RWPE1 (cell line): ENCODE measurements at regions of chr5 and their contacts with region 1.

Region 1: DNA sequence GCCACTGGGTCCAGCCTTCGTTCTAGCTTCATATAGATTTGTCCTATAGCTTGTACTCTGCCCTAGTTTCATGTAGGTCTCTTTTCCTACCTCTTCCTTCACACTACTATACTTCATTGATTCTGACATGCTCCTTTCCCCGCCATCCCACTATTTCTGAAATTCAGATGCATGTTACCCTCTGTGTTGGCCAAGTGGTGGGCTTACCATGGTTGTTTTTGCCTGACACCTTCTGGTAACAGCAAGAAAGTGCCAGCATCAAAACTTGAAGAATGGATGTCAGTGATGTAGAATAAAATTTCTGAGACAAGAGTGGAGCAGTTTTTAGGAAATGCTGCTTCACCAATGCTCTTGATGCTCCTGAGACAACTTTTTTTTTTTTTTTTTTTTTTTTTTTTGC is 19.5 kb upstream of the SERINC5 start:
- DNase-seq: no peak
- H3K27ac ChIP-seq: no peak overlapping the region
- CTCF ChIP-seq: peak; percentile 33

Region 2: DNA sequence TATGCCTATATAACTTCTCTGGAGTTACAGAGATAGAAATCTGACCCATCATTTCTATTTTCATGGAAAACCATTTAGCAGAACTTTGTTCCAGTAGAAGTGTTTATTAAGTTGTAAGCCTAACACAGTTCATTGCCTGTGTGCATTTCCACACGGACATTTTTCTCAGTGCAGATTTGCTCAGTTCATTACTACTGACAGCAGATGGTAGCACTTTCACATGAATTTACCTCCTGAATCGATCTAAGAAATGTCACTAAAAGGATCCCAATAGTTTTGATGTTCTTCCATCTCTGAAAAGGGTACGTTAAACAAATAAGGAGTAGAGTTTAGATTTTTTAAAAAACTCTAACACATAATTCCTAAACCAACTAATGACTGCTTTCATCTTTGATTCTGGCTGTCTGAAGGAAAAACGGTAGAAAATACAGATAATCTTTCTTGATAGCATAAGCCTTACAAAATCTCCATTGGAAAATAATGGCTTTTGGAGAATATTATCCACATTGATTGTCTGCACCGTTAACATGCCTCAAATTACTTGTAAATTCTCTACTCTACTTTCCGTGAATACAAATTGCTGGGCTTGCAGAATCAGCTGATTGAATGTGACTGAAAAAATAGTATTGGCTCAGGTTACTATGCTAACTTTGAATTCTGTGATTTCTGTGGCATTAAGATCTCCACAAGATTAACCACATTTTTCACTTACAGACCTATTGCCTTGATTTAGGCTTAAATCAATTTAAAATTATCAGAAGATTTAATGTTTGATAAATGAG is 1969.7 kb after region 1 on chr5:
- CTCF ChIA-PET with region 1: interaction called, 10 read pairs
- POLR2A ChIA-PET with region 1: no interaction called
- DNase-seq: no peak
- H3K27ac ChIP-seq: no peak overlapping the region
- CTCF ChIP-seq: no peak